ENCODE measurements at regions of chr4 and their contacts with region 1.

Region 1: GRCh38 chr4:118974758-118975157 is 86.1 kb downstream of the SYNPO2 start:
- DNase-seq: no peak
- H3K4me3 ChIP-seq: no peak overlapping the region
- H3K27ac ChIP-seq: peak overlapping the region; percentile 84 to 88
- H3K4me1 ChIP-seq: peaks cover 0 to 8% of the 10 kb centered on the region in 2 donors
- H3K27me3 ChIP-seq: no peaks in the 10 kb centered on the region
- CTCF ChIP-seq: no peak
- POLR2A ChIP-seq: no peak

Region 2: DNA sequence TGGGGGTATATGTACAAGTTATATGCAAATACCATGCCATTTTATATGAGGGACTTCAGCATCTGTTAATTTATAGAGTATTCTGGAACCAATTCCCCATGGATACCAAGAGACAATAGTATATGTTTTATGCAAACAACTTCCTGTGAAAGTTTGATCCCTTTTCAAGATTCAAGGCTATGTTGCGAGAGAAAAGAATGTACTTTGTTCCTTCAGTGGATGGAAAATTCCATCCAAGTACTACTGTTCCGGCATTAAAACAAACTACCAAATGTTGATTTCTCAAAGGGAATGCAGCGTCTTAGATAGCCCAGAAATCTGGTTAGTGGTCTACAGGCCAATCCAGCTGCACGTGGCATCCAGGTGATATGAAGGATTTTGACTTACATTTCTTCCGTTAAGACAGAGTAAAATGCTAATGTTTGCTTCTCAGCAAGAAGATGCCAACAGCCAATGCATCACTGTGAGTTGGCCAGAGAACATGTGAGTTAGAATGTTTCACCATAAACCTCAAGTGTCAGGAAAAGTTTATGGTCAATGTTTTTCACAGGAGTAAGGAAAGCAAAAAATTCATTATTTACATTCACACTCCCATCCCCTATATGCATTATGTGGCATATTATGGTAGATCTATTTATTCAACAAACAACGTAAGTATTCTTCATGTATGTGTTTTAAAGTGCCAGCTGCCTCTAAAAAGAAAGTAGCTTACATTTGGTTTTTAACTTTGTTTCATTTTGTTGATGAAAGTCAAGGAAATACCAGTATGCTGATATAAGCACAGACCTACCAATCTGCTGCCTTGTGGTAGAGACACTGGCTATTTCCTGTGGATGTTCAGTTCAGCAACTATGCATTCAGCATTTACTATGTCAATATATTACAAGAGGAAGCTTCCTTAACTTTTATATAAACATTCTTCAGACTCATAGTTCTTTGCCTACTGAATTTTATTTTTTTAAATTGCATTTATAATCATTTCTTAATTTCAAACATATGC is 245.2 kb before region 1 on chr4:
- intact Hi-C with region 1: loop called (anchors 10 kb)
- DNase-seq: no peak
- H3K4me3 ChIP-seq: no peak overlapping the region
- H3K27ac ChIP-seq: no peak overlapping the region
- H3K4me1 ChIP-seq: no peaks in the 10 kb centered on the region
- H3K27me3 ChIP-seq: no peaks in the 10 kb centered on the region
- CTCF ChIP-seq: no peak
- POLR2A ChIP-seq: no peak

Region 3: GRCh38 chr4:119025916-119026661 is 51.3 kb after region 1 on chr4:
- intact Hi-C with region 1: no loop called
- DNase-seq: peak; percentile 71 to 88
- H3K4me3 ChIP-seq: peak overlapping the region; percentile 31 to 39
- H3K27ac ChIP-seq: peak overlapping the region; percentile 93 to 99
- H3K4me1 ChIP-seq: peaks cover 7 to 8% of the 10 kb centered on the region in 2 donors
- H3K27me3 ChIP-seq: no peaks in the 10 kb centered on the region
- CTCF ChIP-seq: no peak
- POLR2A ChIP-seq: peak; percentile 29 to 48